GM12878 (cell line): ENCODE measurements at regions of chr1 and their contacts with region 1.

Region 1: DNA sequence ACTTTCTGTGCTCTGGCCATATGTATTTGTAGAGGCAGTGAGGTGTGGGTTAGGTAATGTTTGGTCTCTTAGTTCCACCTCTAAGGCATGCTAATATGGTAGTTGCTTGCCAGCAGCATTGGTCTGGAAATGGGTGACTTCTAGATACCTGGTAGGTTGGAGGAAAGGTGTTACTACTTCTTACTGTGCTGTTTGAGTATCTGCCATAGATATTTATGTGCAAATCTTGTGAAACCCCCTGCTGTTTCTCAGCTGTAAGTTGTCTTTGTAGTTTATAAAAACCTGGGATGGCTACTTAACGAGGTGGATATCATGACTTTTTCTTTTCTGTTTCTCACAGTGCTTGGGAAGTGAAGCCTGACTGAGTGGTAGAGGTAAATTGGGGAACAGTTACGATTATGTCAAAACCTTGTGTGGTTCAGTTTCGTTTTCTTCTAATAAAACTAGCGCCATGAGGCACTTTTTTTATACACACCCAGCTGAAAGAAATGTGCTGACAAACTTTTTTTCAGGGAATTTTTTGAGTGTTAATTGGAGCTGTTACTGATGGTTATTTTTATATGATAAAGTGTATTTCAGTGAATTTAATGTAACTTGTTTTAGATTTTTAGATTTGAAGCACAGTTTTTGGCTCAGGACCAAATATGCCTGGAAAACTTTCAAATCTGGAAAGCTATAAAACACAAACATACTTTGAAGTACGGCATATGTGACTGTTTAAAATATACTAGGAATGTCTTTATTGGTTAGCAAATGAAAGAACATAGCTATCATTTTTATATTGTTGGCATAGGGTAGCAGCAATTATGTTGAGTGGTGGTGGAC is 42.1 kb downstream of the CAMSAP2 start:
- DNase-seq: peak; percentile 61
- ATAC-seq: peak; percentile 89
- H3K4me3 ChIP-seq: peak overlapping the region; percentile 4; the same call in 1 of the 2 replicates
- H3K27ac ChIP-seq: peak overlapping the region; percentile 71
- H3K4me1 ChIP-seq: peaks cover 10% of the 10 kb centered on the region
- H3K27me3 ChIP-seq: no peaks in the 10 kb centered on the region
- CTCF ChIP-seq: no peak
- EP300 ChIP-seq: no peak
- POLR2A ChIP-seq: no peak
- RAD21 ChIP-seq: no peak

Region 2: GRCh38 chr1:200738740-200739498 is 41.8 kb before region 1 on chr1 and contains the start of gene CAMSAP2:
- CTCF ChIA-PET with region 1: interaction called, 3 read pairs
- POLR2A ChIA-PET with region 1: interaction called, 7 read pairs
- RAD21 ChIA-PET with region 1: interaction called, 8 read pairs
- SMC1A ChIA-PET with region 1: interaction called, 10 read pairs
- in situ Hi-C with region 1: no loop called
- intact Hi-C with region 1: loop called (anchors 5 kb)
- DNase-seq: no peak
- ATAC-seq: peak; percentile 75
- H3K4me3 ChIP-seq: peak within 1 kb of the TSS; percentile 99
- H3K27ac ChIP-seq: peak within 1 kb of the TSS; percentile 88
- H3K4me1 ChIP-seq: peaks cover 5% of the 10 kb centered on the region; the same call in 1 of the 2 replicates
- H3K27me3 ChIP-seq: no peaks in the 10 kb centered on the region
- CTCF ChIP-seq: no peak
- EP300 ChIP-seq: no peak
- POLR2A ChIP-seq: peak; percentile 71
- RAD21 ChIP-seq: no peak
- polyA plus RNA-seq, gene CAMSAP2: 5.0 to 6.4 TPM

Region 3: DNA sequence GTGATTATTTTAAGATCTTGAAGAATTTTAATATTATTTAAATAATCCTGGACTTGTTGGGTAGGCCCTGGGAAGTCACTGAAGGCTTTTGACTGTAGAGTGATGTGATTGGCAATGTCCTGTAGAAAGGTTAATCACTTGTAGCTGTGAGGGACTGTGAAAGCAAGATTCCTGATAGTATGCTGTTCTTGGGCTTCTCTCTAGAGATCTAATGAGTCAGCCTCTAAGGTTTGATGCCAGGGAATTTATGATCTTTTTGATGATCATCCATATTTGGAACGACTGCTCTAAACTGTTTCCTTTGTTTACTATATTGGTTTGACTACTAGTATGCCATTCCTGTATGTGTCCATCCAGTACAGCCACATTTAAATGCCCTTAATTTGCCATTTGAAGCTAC is 14.4 kb after region 1 on chr1:
- CTCF ChIA-PET with region 1: interaction called, 5 read pairs
- POLR2A ChIA-PET with region 1: interaction called, 3 read pairs
- RAD21 ChIA-PET with region 1: interaction called, 4 read pairs
- SMC1A ChIA-PET with region 1: interaction called, 14 read pairs
- in situ Hi-C with region 1: no loop called
- intact Hi-C with region 1: no loop called
- DNase-seq: no peak
- ATAC-seq: no peak
- H3K4me3 ChIP-seq: no peak overlapping the region
- H3K27ac ChIP-seq: no peak overlapping the region
- H3K4me1 ChIP-seq: no peaks in the 10 kb centered on the region; the same call in 1 of the 2 replicates
- H3K27me3 ChIP-seq: no peaks in the 10 kb centered on the region
- CTCF ChIP-seq: no peak
- EP300 ChIP-seq: no peak
- POLR2A ChIP-seq: no peak
- RAD21 ChIP-seq: no peak